MCF 10A (cell line): ENCODE measurements at regions of chr5 and their contacts with region 1.

Region 1: DNA sequence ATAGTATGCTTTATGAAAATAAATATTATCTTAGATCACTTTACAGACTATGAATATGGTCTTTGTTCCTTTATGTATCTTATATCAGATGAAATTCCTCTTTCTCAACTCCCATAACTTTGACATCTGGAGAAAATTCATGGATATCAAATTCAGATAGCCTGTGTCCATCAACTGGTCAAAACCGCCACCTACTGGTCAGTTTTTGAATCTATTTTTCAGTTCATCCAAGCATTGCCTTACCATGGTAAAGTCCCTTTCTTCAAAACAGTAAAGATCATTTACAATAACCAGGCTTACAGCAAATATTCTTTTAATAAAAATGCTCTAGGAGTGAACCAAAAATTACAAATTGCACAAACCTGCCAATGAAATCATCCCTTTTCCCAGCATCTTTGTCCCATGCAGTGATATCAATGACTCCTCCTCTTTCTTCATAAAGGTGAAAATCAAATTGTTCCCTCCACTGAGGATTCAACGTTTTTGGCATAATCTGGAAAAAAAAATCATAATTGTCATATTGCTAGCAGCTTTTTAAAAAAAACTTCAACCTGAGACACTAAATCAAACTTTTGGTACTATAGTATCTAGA is 290.5 kb downstream of the SLF1 start:
- DNase-seq: peak; percentile 59
- H3K4me3 Mint-ChIP-seq: no peak overlapping the region
- H3K27ac Mint-ChIP-seq: no peak overlapping the region
- H3K4me1 Mint-ChIP-seq: no peaks in the 10 kb centered on the region
- H3K27me3 Mint-ChIP-seq: no peaks in the 10 kb centered on the region
- CTCF ChIP-seq: peak; percentile 54

Region 2: GRCh38 chr5:94524841-94525697 is 383.9 kb before region 1 on chr5:
- CTCF ChIA-PET with region 1: interaction called, 3 read pairs
- POLR2A ChIA-PET with region 1: no interaction called
- intact Hi-C with region 1: loop called (anchors 1 kb)
- DNase-seq: peak; percentile 45
- H3K4me3 Mint-ChIP-seq: no peak overlapping the region
- H3K27ac Mint-ChIP-seq: no peak overlapping the region
- H3K4me1 Mint-ChIP-seq: no peaks in the 10 kb centered on the region
- H3K27me3 Mint-ChIP-seq: no peaks in the 10 kb centered on the region
- CTCF ChIP-seq: peak; percentile 68

Region 3: GRCh38 chr5:94618493-94619328 is 290.3 kb before region 1 on chr5 and contains the starts of genes KIAA0825 and SLF1:
- CTCF ChIA-PET with region 1: no interaction called
- POLR2A ChIA-PET with region 1: no interaction called
- intact Hi-C with region 1: loop called (anchors 1 kb)
- DNase-seq: peak; percentile 93
- H3K4me3 Mint-ChIP-seq: peak within 1 kb of the TSS; percentile 87
- H3K27ac Mint-ChIP-seq: peak within 1 kb of the TSS; percentile 74
- H3K4me1 Mint-ChIP-seq: peaks cover 20% of the 10 kb centered on the region
- H3K27me3 Mint-ChIP-seq: no peaks in the 10 kb centered on the region
- CTCF ChIP-seq: no peak
- total RNA-seq, gene KIAA0825: 2.1 and 2.5 TPM in 2 replicates
- total RNA-seq, gene SLF1: 6.0 and 7.5 TPM in 2 replicates

Region 4: DNA sequence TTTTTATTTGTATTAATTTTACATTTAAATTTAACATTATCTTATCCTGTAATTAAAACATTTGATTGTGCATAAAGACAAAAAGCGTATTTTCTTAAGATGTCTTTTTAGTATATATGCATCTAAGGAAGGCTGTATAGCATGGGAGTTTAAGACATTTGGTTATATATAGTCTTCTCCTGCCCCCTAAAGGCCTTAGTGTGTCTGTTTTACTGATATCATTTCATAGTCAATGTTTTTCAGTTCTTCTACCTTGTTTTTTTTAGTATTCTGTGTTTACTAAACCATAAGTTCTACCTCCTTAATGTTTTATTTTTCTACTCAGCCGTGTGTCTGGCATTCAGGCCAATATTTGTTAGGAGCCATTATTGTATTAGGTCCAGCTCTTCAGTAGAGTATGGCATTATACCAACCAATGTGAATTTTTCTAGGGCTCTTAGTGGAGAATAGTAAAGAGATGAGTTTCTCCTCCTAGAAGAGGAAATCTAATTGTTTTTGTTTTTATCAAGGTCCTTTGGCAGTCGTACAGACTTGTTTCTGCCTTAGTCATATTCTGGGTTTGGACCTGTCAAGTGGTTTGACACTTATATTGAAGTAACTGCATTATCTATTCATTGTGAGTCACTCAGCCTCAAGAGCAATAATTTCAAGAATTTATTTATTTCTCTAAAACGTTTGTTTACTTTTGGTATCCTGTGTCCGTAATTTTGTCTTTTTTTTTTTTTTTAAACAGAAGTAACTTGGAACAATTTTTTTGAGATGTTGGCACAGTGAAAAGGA is 215.8 kb before region 1 on chr5:
- CTCF ChIA-PET with region 1: no interaction called
- POLR2A ChIA-PET with region 1: no interaction called
- intact Hi-C with region 1: loop called (anchors 2 kb)
- DNase-seq: peak; percentile 75
- H3K4me3 Mint-ChIP-seq: peak overlapping the region; percentile 24
- H3K27ac Mint-ChIP-seq: peak overlapping the region; percentile 79
- H3K4me1 Mint-ChIP-seq: peaks cover 16% of the 10 kb centered on the region
- H3K27me3 Mint-ChIP-seq: no peaks in the 10 kb centered on the region
- CTCF ChIP-seq: peak; percentile 38

Region 5: GRCh38 chr5:94740286-94740685 is 168.7 kb before region 1 on chr5:
- CTCF ChIA-PET with region 1: interaction called, 10 read pairs
- POLR2A ChIA-PET with region 1: no interaction called
- intact Hi-C with region 1: loop called (anchors 2 kb)
- DNase-seq: no peak
- H3K4me3 Mint-ChIP-seq: no peak overlapping the region
- H3K27ac Mint-ChIP-seq: peak overlapping the region; percentile 31
- H3K4me1 Mint-ChIP-seq: no peaks in the 10 kb centered on the region
- H3K27me3 Mint-ChIP-seq: no peaks in the 10 kb centered on the region
- CTCF ChIP-seq: no peak

Region 6: DNA sequence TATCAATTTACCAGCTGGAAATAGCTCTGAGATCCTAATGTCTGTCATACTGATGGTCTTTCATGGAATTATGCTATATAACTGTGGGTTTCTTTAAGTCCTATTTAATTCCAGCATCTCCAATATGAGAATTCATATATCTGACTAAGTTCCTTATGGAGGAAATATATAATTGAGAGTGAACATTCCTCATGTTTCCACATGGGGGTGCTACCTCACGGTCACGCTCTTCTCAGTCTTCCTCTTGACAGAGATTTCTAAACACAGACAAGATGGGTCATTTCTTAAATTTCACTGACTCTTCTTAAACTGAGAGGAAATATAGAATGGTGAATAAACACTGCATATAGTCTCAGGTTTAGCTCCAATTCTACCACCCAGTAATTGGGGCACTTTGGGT is 78.5 kb before region 1 on chr5:
- CTCF ChIA-PET with region 1: interaction called, 4 read pairs
- POLR2A ChIA-PET with region 1: no interaction called
- intact Hi-C with region 1: loop called (anchors 1 kb)
- DNase-seq: peak; percentile 32
- H3K4me3 Mint-ChIP-seq: no peak overlapping the region
- H3K27ac Mint-ChIP-seq: no peak overlapping the region
- H3K4me1 Mint-ChIP-seq: no peaks in the 10 kb centered on the region
- H3K27me3 Mint-ChIP-seq: no peaks in the 10 kb centered on the region
- CTCF ChIP-seq: peak; percentile 22

Region 7: GRCh38 chr5:95261437-95262175 is 352.6 kb after region 1 on chr5:
- CTCF ChIA-PET with region 1: no interaction called
- POLR2A ChIA-PET with region 1: no interaction called
- intact Hi-C with region 1: loop called (anchors 1 kb)
- DNase-seq: peak; percentile 52
- H3K4me3 Mint-ChIP-seq: no peak overlapping the region
- H3K27ac Mint-ChIP-seq: no peak overlapping the region
- H3K4me1 Mint-ChIP-seq: no peaks in the 10 kb centered on the region
- H3K27me3 Mint-ChIP-seq: peaks cover under 1% of the 10 kb centered on the region
- CTCF ChIP-seq: peak; percentile 53